ENCODE measurements at regions of chr11 and their contacts with region 1.

Region 1: GRCh38 chr11:9861860-9862725 is 198.2 kb downstream of the SWAP70 start:
- DNase-seq: peak; percentile 37 to 50
- ATAC-seq: peak; percentile 94

Region 2: GRCh38 chr11:9962722-9963121 is 100.6 kb after region 1 on chr11:
- intact Hi-C with region 1: loop called in 1 of 2 experiments (anchors 10 kb)
- DNase-seq: no peak
- ATAC-seq: no peak